H1 (cell line): ENCODE measurements at regions of chr15 and their contacts with region 1.

Region 1: DNA sequence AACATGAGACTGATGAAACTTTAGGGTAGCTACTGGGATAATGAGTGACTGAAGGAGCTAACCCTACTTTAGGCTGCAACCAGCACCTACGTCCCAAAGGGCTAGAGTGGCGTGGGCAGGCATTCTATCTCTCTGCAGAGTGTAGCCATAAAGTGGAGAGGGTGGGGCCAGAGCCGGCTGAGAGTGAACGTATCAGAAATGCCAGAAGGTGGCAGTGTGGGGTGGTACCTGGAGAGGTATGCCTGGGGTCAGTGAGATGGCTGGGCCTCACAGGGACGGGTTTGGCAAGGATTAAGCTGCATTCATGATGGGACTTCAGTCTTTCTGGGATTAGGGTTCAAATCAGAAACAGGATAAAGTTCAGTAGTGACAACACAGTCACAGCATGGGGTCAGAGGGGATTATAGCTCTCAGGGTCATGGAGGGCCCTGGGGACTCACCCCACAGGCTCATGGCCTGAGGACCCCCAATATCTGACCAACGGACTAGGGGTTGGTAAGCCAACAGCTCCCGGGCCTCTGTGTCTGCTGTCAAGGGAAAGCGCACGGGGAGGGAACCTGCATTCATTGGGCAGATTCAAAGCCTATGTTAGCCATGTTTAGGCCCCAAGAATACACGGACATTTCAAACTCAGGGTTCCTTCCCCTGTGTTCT is 86.5 kb upstream of the FOXB1 start:
- DNase-seq: peak; percentile 56 to 88
- H3K4me3 ChIP-seq: no peak overlapping the region
- H3K27ac ChIP-seq: no peak overlapping the region
- H3K4me1 ChIP-seq: peaks cover 0 to 8% (median 5%) of the 10 kb centered on the region in 4 experiments; a peak in 4 of 7 replicates
- H3K27me3 ChIP-seq: no peaks in the 10 kb centered on the region
- CTCF ChIP-seq: peak; percentile 71 to 93 (median 83)
- EP300 ChIP-seq: no peak
- POLR2A ChIP-seq: no peak
- RAD21 ChIP-seq: peak; percentile 89 to 95

Region 2: GRCh38 chr15:59904450-59905135 is 13.0 kb before region 1 on chr15:
- CTCF ChIA-PET with region 1: interaction called, 32 read pairs
- POLR2A ChIA-PET with region 1: no interaction called
- DNase-seq: peak in 1 of 2 experiments; percentile 58
- H3K4me3 ChIP-seq: peak overlapping the region in 1 of 4 experiments; percentile 15; a peak in 1 of 8 replicates
- H3K27ac ChIP-seq: no peak overlapping the region
- H3K4me1 ChIP-seq: peaks cover 0 to 6% (median 4%) of the 10 kb centered on the region in 4 experiments; a peak in 5 of 7 replicates
- H3K27me3 ChIP-seq: no peaks in the 10 kb centered on the region
- CTCF ChIP-seq: no peak
- EP300 ChIP-seq: no peak
- POLR2A ChIP-seq: no peak
- RAD21 ChIP-seq: peak in 1 of 2 experiments; percentile 19; a peak in 1 of 4 replicates

Region 3: DNA sequence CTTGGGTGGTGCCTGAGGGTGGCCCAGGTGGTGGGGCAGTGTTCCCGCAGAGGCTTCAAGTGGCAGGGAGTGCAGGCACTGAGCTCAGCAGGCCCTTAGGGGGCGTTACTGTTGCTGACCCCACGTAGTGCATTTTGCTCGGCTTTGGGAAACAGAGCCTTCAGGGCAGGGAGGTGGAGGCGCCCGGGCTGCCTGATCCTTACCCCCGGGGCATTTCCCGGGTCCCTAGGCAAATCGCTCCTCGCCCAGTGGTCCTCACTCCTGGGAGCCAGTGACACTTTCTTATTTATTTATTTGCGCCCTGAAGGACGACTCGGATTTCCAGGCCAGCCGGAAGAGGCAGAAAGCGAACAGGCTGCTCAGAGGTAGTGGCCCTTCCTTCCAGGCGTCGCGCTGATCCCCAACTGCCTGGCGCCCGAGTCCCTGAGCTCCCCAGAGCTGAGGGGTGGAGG is 76.3 kb after region 1 on chr15:
- CTCF ChIA-PET with region 1: interaction called, 30 read pairs
- POLR2A ChIA-PET with region 1: interaction called, 7 read pairs
- DNase-seq: peak in 1 of 2 experiments; percentile 74
- H3K4me3 ChIP-seq: peak overlapping the region; percentile 31 to 63 (median 58)
- H3K27ac ChIP-seq: no peak overlapping the region
- H3K4me1 ChIP-seq: peaks cover 5 to 23% (median 15%) of the 10 kb centered on the region in 4 experiments; a peak in 6 of 7 replicates
- H3K27me3 ChIP-seq: peaks cover 0 to 34% (median 17%) of the 10 kb centered on the region in 4 experiments; a peak in 6 of 7 replicates
- CTCF ChIP-seq: peak; percentile 76 to 82 (median 77)
- EP300 ChIP-seq: no peak
- POLR2A ChIP-seq: no peak
- RAD21 ChIP-seq: peak; percentile 51 to 62

Region 4: DNA sequence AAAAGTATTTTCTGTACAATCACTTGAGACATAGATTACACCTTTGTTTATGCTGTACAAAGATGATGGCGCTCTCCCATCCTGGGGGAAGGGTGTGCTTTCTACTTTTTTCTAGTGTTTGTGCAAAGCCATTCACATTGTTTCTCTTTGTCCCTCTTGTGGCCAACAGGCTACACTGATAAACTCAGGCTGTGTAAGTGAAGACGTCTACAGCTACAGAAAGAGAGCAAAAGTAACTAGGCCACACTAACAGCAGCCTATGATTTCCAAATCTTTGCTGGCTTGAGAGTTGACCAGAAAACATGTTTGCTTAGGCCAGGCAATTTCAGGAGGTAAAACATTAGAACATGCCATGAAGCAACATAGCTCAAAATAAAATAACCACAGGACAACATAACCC is 161.6 kb after region 1 on chr15:
- CTCF ChIA-PET with region 1: interaction called, 25 read pairs
- POLR2A ChIA-PET with region 1: no interaction called
- DNase-seq: no peak
- H3K4me3 ChIP-seq: no peak overlapping the region
- H3K27ac ChIP-seq: no peak overlapping the region
- H3K4me1 ChIP-seq: peaks cover 0 to 18% (median 17%) of the 10 kb centered on the region in 4 experiments
- H3K27me3 ChIP-seq: no peaks in the 10 kb centered on the region
- CTCF ChIP-seq: peak in 2 of 3 experiments; percentile 30 to 66; a peak in 2 of 4 replicates
- EP300 ChIP-seq: no peak
- POLR2A ChIP-seq: no peak
- RAD21 ChIP-seq: peak; percentile 48 to 62

Region 5: DNA sequence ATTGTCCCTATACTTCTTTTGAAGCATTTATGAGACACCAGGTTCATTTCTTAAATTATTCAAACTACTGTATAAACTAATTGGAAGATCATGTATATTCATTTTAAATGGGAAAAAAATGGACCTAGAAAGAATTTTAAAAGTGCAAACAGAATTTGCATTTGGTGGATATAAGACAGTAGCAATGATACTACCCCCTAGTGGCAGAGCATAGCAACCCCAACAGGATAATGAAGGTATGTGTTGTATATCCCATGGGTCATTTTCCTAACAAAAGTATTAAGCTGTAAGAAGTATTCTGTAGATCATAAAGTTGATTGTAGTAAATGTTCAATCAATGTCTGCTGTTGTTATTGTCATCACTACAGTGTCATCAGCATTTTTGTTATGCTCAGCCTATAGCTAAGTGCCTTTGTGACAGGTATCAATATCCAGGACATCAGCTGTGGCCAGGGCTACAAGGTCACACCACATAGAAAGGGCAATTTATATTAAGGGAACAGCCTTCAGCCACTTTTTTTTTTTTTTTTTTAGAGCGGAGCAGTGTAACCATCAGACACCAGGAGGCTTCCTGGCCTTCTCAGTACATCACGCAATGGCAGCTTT is 262.3 kb after region 1 on chr15:
- CTCF ChIA-PET with region 1: interaction called, 18 read pairs
- POLR2A ChIA-PET with region 1: no interaction called
- DNase-seq: no peak
- H3K4me3 ChIP-seq: no peak overlapping the region
- H3K27ac ChIP-seq: no peak overlapping the region
- H3K4me1 ChIP-seq: 0 out of 7 replicates have a peak, but pooled peaks cover 0 to 3% (median 0%) of the 10 kb centered on the region in 4 experiments
- H3K27me3 ChIP-seq: peaks cover 0 to 1% (median 0%) of the 10 kb centered on the region in 4 experiments; a peak in 1 of 7 replicates
- CTCF ChIP-seq: peak in 2 of 3 experiments; percentile 44 to 78; a peak in 2 of 4 replicates
- EP300 ChIP-seq: no peak
- POLR2A ChIP-seq: no peak
- RAD21 ChIP-seq: peak; percentile 70 to 74